H1 (cell line): ENCODE measurements at regions of chr18 and their contacts with region 1.

Region 1: GRCh38 chr18:76480913-76481312 is 14.1 kb downstream of the ZNF516 start:
- DNase-seq: no peak
- H3K4me3 ChIP-seq: no peak overlapping the region
- H3K27ac ChIP-seq: no peak overlapping the region
- H3K4me1 ChIP-seq: peaks cover 0 to 5% (median 4%) of the 10 kb centered on the region in 4 experiments; a peak in 4 of 7 replicates
- H3K27me3 ChIP-seq: no peaks in the 10 kb centered on the region
- CTCF ChIP-seq: peak; percentile 46 to 62 (median 47)
- EP300 ChIP-seq: no peak
- POLR2A ChIP-seq: no peak
- RAD21 ChIP-seq: peak; percentile 36 to 46

Region 2: GRCh38 chr18:76465630-76466409 is 15.1 kb before region 1 on chr18:
- CTCF ChIA-PET with region 1: interaction called, 25 read pairs
- POLR2A ChIA-PET with region 1: no interaction called
- DNase-seq: no peak
- H3K4me3 ChIP-seq: no peak overlapping the region
- H3K27ac ChIP-seq: no peak overlapping the region
- H3K4me1 ChIP-seq: no peaks in the 10 kb centered on the region
- H3K27me3 ChIP-seq: no peaks in the 10 kb centered on the region
- CTCF ChIP-seq: no peak
- EP300 ChIP-seq: no peak
- POLR2A ChIP-seq: no peak
- RAD21 ChIP-seq: no peak

Region 3: DNA sequence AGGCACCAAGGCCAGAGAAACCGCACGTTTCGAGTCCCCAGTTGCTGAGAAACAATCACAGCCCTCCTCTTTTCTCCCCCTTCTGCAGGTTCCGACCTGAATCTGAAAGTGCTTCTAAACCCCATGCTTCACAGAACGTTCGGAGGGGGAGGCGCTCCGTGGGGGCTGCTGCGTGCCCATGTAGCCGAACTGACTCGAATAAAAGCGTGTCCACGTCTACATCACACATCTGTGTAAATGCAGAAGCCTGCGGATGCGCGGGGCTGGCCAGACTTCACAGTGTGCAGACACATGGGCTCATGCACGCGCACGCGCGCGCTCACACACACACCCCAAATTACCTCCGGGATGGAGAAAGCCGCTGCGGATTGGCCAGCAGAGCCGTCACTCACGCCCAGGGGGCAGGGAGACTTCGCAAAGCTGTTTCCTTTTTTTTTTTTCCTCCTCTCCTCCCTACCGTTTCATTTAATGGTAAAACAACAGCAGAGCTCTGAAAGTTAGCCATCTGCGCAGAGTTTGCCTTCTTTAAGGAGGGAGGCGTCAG is 11.8 kb after region 1 on chr18:
- CTCF ChIA-PET with region 1: interaction called, 10 read pairs
- POLR2A ChIA-PET with region 1: interaction called, 11 read pairs
- DNase-seq: peak; percentile 93 to 100
- H3K4me3 ChIP-seq: peak overlapping the region; percentile 54 to 76 (median 66)
- H3K27ac ChIP-seq: no peak overlapping the region
- H3K4me1 ChIP-seq: peaks cover 3 to 12% (median 9%) of the 10 kb centered on the region in 4 experiments
- H3K27me3 ChIP-seq: peaks cover 6 to 34% (median 17%) of the 10 kb centered on the region in 4 experiments
- CTCF ChIP-seq: no peak
- EP300 ChIP-seq: no peak
- POLR2A ChIP-seq: no peak; a peak in 1 of 3 replicates
- RAD21 ChIP-seq: no peak

Region 4: GRCh38 chr18:76518123-76518859 is 37.4 kb after region 1 on chr18:
- CTCF ChIA-PET with region 1: interaction called, 12 read pairs
- POLR2A ChIA-PET with region 1: interaction called, 4 read pairs
- DNase-seq: peak in 1 of 2 experiments; percentile 68
- H3K4me3 ChIP-seq: peak overlapping the region; percentile 42 to 61 (median 51); a peak in 6 of 8 replicates
- H3K27ac ChIP-seq: no peak overlapping the region
- H3K4me1 ChIP-seq: peaks cover 3 to 11% (median 6%) of the 10 kb centered on the region in 4 experiments; a peak in 5 of 7 replicates
- H3K27me3 ChIP-seq: peaks cover 0 to 2% (median 0%) of the 10 kb centered on the region in 4 experiments; a peak in 2 of 7 replicates
- CTCF ChIP-seq: no peak
- EP300 ChIP-seq: no peak
- POLR2A ChIP-seq: peak in 1 of 2 experiments; percentile 68; a peak in 2 of 3 replicates
- RAD21 ChIP-seq: no peak

Region 5: DNA sequence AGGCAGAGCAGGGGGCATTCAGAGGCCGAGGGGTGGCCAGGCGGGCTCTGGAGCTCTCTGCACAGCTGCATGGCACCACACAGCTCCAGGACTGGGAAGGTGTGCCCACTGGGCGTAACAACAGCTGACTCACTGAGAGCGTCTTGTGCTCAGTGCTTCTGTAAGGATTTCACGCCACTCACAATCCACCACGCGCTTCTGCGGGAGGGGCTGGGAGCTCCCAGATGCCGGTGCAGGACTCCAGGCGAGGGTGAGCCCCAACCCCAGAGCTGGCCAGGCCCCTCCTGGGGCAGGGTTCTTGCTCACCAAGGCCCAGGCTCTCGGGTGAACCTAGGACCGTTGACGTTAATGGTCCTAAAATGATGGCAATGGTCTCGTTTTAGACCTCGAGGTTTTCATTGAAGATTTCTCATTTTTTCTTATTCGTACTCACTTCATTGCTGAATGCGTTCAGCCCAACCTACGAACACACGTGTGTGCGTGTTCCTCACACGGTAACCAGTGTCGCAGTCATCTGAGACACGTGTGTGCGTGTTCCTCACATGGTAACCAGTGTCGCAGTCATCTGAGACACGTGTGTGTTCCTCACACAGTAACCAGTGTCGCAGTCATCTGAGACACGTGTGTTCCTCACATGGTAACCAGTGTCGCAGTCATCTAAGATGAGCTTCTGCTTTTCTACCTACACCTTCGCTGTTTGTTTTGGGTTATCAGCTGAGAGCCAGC is 303.0 kb after region 1 on chr18:
- CTCF ChIA-PET with region 1: no interaction called
- POLR2A ChIA-PET with region 1: no interaction called
- DNase-seq: no peak
- H3K4me3 ChIP-seq: no peak overlapping the region
- H3K27ac ChIP-seq: no peak overlapping the region
- H3K4me1 ChIP-seq: peaks cover 0 to 3% (median 0%) of the 10 kb centered on the region in 4 experiments; a peak in 2 of 7 replicates
- H3K27me3 ChIP-seq: no peaks in the 10 kb centered on the region
- CTCF ChIP-seq: no peak
- EP300 ChIP-seq: no peak
- POLR2A ChIP-seq: no peak
- RAD21 ChIP-seq: no peak